MCF 10A (cell line): ENCODE measurements at regions of chr11 and their contacts with region 1.

Region 1: GRCh38 chr11:74449369-74449931 is 17.9 kb downstream of the KCNE3 start:
- DNase-seq: peak; percentile 84
- H3K4me3 Mint-ChIP-seq: no peak overlapping the region
- H3K27ac Mint-ChIP-seq: no peak overlapping the region
- H3K4me1 Mint-ChIP-seq: peaks cover 14% of the 10 kb centered on the region
- H3K27me3 Mint-ChIP-seq: no peaks in the 10 kb centered on the region
- CTCF ChIP-seq: peak; percentile 72

Region 2: DNA sequence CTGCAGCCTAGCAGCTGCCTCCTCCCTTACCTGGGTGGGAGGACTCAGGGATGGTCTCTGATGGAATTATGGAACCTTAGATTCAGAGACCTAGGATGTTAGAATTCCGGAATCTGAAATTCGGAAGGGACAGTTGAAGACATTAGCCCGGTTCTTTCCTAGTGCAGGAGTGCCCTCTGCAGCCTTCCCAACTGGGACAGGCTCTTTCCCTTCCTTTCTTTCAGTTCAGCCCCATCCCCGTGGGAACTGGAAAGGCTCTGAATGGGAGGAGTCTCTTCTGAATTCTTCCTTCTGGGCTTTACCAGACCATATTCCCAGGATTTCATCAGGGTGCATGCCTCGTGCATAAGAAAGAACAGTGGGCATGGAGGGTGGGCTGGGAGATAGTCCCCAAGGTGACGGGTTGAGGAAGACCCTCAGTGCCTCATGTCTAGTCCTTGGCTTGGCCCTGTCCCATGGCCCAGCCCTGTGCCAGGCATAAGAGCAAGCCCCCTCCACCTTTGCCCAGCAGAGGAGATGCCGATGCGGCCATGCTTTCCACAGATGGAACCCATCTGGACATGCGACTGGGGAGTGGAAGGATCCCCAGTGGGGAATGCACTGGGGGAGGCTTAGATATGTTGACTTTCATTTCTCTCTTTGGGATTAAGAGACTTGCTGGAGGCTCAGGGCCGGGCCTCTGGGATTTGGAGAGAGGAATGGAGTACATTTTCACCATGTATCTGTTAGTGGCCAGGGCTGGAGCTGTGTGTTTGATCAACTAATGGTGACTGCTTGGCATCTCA is 484.2 kb before region 1 on chr11:
- CTCF ChIA-PET with region 1: interaction called, 4 read pairs
- POLR2A ChIA-PET with region 1: interaction called, 3 read pairs
- intact Hi-C with region 1: loop called (anchors 1 kb)
- DNase-seq: no peak
- H3K4me3 Mint-ChIP-seq: no peak overlapping the region
- H3K27ac Mint-ChIP-seq: no peak overlapping the region
- H3K4me1 Mint-ChIP-seq: peaks cover 7% of the 10 kb centered on the region
- H3K27me3 Mint-ChIP-seq: peaks cover 8% of the 10 kb centered on the region
- CTCF ChIP-seq: no peak

Region 3: DNA sequence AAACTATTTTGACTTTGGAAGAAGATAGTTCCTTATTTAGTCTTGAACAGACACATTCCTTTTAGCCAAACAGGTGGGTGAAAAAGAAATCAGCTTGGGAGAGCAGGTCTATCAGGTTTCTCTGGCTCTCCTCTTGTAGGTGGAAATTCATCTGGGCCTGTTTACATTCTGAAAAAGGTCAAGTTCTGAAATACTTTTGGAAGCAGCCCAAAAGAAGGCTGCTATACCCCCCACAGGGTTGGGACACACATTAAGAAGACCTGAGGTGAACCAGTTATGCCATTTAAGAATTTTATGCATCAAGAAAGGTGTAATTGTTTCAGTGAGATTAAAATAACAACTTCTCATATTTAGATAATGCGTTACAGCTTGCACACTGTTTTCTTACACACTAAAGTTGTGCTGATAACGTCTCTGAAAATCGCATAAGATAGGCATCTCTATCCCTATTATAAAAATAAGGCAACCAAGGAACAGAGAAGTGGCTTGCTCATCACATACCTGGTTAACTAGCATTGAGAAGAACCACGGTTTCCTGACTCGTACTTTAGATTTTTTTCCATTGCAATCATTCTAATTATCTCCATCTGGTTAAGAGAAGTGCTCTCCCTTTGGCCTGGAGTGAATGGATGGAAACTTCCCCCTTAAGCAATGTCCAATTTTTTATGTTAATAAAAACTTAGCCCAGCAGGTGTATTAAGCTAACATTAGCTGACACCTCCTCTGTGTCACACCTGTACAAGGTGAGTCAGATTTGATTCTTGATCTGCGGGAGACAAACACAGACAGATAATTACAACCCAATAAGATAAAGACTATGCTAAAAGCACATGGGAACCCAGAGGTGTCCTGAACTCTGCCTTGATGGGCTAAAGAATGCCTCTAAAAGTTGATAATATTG is 380.1 kb before region 1 on chr11:
- CTCF ChIA-PET with region 1: no interaction called
- POLR2A ChIA-PET with region 1: no interaction called
- intact Hi-C with region 1: no loop called
- DNase-seq: no peak
- H3K4me3 Mint-ChIP-seq: no peak overlapping the region
- H3K27ac Mint-ChIP-seq: no peak overlapping the region
- H3K4me1 Mint-ChIP-seq: peaks cover 5% of the 10 kb centered on the region
- H3K27me3 Mint-ChIP-seq: no peaks in the 10 kb centered on the region
- CTCF ChIP-seq: no peak

Region 4: DNA sequence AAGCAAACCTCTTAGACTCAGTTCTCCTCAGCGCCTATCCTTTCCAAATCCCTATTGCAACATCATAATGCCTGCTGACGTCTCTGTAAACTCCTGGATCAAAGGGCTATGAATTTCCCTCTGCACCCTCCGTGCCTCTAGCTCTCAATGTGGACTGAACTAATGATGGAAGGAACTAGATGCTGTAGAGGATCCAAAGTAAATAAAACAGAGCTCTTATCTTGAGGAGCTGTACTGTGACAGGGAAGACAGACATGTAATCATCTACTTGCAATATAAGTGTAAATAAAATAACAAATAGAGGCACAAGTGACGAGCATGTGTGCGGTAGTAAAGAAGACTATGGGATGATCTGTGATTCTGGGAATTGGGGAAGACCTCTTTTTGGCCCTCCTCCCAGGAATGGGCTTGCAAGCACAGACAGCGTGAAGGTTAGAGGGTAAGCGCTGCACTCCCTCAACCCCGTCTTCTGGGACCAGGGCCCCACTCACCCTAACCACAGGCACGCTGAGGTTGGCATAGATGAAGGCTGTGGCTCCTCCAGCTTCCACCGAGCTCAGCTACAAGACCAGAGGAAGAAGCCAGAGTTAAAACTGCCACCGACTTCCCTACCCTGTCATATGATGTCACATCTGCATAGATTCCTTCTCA is 180.2 kb before region 1 on chr11:
- CTCF ChIA-PET with region 1: interaction called, 12 read pairs
- POLR2A ChIA-PET with region 1: no interaction called
- intact Hi-C with region 1: no loop called
- DNase-seq: peak; percentile 83
- H3K4me3 Mint-ChIP-seq: no peak overlapping the region
- H3K27ac Mint-ChIP-seq: no peak overlapping the region
- H3K4me1 Mint-ChIP-seq: peaks cover 19% of the 10 kb centered on the region
- H3K27me3 Mint-ChIP-seq: no peaks in the 10 kb centered on the region
- CTCF ChIP-seq: no peak

Region 5: GRCh38 chr11:74462009-74462408 is 12.6 kb after region 1 on chr11:
- CTCF ChIA-PET with region 1: interaction called, 43 read pairs
- POLR2A ChIA-PET with region 1: no interaction called
- intact Hi-C with region 1: no loop called
- DNase-seq: peak; percentile 44
- H3K4me3 Mint-ChIP-seq: no peak overlapping the region
- H3K27ac Mint-ChIP-seq: no peak overlapping the region
- H3K4me1 Mint-ChIP-seq: no peaks in the 10 kb centered on the region
- H3K27me3 Mint-ChIP-seq: no peaks in the 10 kb centered on the region
- CTCF ChIP-seq: no peak

Region 6: GRCh38 chr11:74559110-74559933 is 109.9 kb after region 1 on chr11:
- CTCF ChIA-PET with region 1: interaction called, 447 read pairs
- POLR2A ChIA-PET with region 1: no interaction called
- intact Hi-C with region 1: no loop called
- DNase-seq: no peak
- H3K4me3 Mint-ChIP-seq: no peak overlapping the region
- H3K27ac Mint-ChIP-seq: no peak overlapping the region
- H3K4me1 Mint-ChIP-seq: no peaks in the 10 kb centered on the region
- H3K27me3 Mint-ChIP-seq: no peaks in the 10 kb centered on the region
- CTCF ChIP-seq: no peak

Region 7: GRCh38 chr11:74577624-74578396 is 128.4 kb after region 1 on chr11:
- CTCF ChIA-PET with region 1: interaction called, 447 read pairs
- POLR2A ChIA-PET with region 1: interaction called, 3 read pairs
- intact Hi-C with region 1: no loop called
- DNase-seq: no peak
- H3K4me3 Mint-ChIP-seq: no peak overlapping the region
- H3K27ac Mint-ChIP-seq: no peak overlapping the region
- H3K4me1 Mint-ChIP-seq: no peaks in the 10 kb centered on the region
- H3K27me3 Mint-ChIP-seq: no peaks in the 10 kb centered on the region
- CTCF ChIP-seq: no peak